ENCODE measurements at regions of chr3 and their contacts with region 1.

Region 1: DNA sequence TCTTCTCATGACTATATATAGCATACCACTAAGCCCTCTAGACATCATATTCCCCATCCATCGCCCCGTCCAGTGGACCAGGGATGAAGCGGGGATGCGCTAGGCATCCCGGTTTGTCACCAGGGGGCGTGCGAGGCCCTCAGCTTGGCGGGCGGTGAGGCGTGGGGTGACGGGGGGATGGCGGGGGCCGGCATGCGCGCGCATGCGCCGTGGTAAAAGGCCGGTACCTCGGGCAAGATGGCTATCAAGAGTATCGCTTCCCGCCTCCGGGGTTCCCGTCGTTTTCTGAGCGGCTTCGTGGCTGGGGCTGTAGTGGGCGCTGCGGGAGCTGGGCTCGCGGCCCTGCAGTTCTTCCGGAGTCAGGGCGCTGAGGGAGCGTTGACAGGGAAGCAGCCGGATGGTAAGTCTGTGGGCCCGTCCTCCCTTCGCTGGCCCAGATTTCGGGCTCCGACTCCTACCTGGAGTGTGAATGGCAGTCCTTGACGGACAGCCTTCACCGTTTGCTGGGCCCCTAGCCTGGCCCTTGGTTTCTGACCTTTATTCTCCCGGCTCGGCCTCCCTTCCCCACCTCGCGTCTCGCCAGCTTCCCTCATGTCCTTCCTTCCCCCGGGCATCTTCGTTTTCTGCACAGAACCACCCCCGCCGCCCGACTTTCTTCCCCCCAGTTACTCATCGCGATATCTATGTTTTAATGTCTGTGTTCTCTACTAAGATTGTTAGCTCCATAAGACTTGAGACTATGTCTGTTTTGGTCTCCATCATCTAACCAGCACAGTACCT is at the start of gene EXOG:
- DNase-seq: peak; percentile 99
- CTCF ChIP-seq: peak; percentile 77

Region 2: DNA sequence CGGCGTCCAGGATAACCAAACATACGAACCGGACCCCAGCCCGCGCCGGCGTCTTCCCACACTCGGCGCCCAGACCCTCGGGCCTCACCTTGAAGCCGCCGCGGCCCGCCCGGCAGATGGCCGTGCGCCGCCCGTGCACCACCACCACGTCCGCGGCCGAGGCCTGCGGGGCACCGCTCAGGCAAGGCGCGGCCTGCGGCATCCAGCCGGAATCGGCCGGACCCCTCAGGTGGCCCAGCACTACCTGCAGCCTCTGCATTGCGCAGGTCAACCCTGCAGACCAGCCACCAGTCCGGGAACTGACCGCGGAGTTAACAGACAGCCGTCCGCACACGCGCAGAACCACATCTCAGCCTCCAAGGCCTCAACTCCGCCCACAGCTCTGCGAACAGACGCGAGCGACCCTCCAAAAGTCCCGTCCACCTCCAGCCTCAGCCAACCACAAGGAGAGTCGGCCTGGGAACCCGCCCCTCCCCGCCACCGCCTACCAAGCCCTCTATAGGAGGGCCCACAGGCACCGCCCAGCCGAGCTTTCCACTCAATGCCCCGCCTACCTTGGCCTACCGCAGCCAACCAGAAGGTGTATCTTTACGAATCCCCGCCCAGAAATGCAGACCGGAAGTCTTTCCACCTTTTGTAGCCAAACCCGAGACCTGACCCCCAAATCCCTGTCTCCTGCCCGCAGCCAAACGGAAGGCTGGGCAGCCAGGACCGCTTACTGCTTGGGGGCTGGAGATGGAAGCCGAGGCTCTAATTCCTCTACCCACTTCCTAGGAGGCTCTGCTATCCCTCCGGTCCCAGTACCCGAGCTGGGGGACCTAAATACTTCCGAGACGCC is 359.3 kb before region 1 on chr3 and contains the start of gene ACAA1:
- in situ Hi-C with region 1: loop called (anchors 25 kb)
- DNase-seq: peak; percentile 98
- CTCF ChIP-seq: no peak

Region 3: GRCh38 chr3:38411591-38411990 is 84.7 kb before region 1 on chr3:
- in situ Hi-C with region 1: no loop called
- DNase-seq: no peak
- CTCF ChIP-seq: no peak